ENCODE measurements at regions of chr19 and their contacts with region 1.

Region 1: GRCh38 chr19:49546825-49547565 is 19.2 kb downstream of the RCN3 start:
- DNase-seq: peak; percentile 94
- H3K4me3 Mint-ChIP-seq: no peak overlapping the region
- H3K27ac Mint-ChIP-seq: no peak overlapping the region
- H3K4me1 Mint-ChIP-seq: no peaks in the 10 kb centered on the region
- H3K27me3 Mint-ChIP-seq: peaks cover 13% of the 10 kb centered on the region
- CTCF ChIP-seq: peak; percentile 71

Region 2: DNA sequence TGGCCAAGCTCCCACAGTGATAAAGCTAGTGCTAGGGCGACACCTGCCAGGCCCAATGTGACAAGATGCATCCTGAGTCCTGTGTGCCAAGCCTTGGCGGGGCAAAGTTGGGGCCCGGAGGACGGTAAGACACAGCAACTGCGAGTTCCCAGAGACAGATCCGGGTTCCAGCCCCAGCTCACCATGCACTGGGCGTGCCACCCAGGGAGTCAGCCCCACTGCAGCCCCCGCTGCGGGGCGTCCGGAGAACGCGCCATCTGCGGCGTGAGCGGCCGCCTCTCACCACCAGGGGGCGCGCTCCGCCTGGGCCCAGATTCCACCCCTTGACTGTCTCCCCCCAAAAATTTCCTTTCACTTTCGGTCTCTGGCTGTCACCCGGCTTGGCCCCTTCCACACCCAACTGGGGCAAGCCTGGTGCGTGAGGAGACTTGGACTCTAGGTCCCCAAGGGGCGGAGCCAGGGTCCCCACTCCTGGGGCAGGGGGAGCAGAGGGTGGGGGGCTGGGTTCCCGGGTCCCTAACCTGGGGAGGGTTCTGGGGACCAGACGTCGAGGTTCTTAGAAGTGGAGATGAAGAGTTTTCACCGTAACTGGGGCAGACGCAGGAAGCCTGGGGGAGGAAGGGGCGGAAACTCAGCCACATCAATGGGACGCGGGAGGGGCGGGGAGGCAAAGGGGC is 73.0 kb before region 1 on chr19 and contains the start of gene FLT3LG:
- CTCF ChIA-PET with region 1: interaction called, 20 read pairs
- POLR2A ChIA-PET with region 1: no interaction called
- intact Hi-C with region 1: loop called (anchors 1 kb)
- DNase-seq: peak; percentile 78
- H3K4me3 Mint-ChIP-seq: peak within 1 kb of the TSS; percentile 77
- H3K27ac Mint-ChIP-seq: peak within 1 kb of the TSS; percentile 59
- H3K4me1 Mint-ChIP-seq: peaks cover 3% of the 10 kb centered on the region
- H3K27me3 Mint-ChIP-seq: peaks cover 13% of the 10 kb centered on the region
- CTCF ChIP-seq: peak; percentile 95
- total RNA-seq, gene FLT3LG: 1.5 and 3.6 TPM in 2 replicates

Region 3: DNA sequence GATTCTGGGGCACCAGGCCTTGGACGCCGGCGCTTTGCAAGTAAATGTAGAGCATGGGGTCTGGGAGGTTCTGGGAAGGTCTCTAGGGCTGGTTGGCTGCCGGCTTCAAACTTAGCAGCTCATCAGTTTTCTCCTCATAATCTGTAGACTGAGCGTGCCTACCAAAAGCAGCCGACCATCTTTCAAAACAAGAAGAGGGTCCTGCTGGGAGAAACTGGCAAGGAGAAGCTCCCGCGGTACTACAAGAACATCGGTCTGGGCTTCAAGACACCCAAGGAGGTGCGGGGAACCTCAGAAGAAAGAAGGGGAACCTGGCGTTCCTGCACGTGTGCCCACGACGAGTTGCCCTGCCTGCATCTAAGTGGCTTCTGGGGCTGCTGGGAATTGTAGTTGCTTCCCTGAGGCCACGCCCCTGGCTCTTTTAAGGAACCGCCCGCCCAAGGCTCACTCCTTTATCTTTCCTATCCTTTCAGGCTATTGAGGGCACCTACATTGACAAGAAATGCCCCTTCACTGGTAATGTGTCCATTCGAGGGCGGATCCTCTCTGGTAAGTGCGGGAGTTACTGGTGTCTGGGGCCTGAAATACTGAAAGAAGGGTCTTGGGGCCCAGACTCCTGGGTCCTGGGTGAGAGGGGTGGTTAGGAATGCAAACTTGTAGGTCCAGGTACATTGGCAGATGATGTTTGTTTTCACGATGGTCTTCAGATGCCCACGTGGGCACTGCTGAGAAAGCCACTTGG is 49.8 kb before region 1 on chr19:
- CTCF ChIA-PET with region 1: interaction called, 45 read pairs
- POLR2A ChIA-PET with region 1: interaction called, 15 read pairs
- intact Hi-C with region 1: no loop called
- DNase-seq: peak; percentile 68
- H3K4me3 Mint-ChIP-seq: peak overlapping the region; percentile 91
- H3K27ac Mint-ChIP-seq: peak overlapping the region; percentile 97
- H3K4me1 Mint-ChIP-seq: peaks cover 6% of the 10 kb centered on the region
- H3K27me3 Mint-ChIP-seq: no peaks in the 10 kb centered on the region
- CTCF ChIP-seq: no peak

Region 4: GRCh38 chr19:49502866-49503581 is 44.0 kb before region 1 on chr19:
- CTCF ChIA-PET with region 1: interaction called, 45 read pairs
- POLR2A ChIA-PET with region 1: interaction called, 15 read pairs
- intact Hi-C with region 1: loop called (anchors 1 kb)
- DNase-seq: peak; percentile 73
- H3K4me3 Mint-ChIP-seq: no peak overlapping the region
- H3K27ac Mint-ChIP-seq: no peak overlapping the region
- H3K4me1 Mint-ChIP-seq: peaks cover 6% of the 10 kb centered on the region
- H3K27me3 Mint-ChIP-seq: no peaks in the 10 kb centered on the region
- CTCF ChIP-seq: peak; percentile 44

Region 5: DNA sequence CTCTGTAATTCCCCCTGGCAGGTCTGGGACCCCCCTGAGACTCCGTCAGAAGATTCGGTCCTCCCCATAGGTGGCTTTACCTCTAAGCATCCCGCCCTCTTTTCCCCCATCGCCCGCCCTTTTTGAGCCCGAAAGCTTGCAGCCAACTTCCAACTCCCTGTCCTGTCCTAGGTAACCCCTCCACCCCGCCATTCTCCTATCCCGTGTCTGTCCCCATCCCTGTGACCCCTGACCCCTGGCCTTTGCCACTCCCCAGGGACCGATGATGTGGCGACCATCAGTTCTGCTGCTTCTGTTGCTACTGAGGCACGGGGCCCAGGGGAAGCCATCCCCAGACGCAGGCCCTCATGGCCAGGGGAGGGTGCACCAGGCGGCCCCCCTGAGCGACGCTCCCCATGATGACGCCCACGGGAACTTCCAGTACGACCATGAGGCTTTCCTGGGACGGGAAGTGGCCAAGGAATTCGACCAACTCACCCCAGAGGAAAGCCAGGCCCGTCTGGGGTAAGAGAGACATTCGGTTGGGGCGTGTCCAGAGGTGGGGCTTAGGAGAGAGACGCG is 18.7 kb before region 1 on chr19:
- CTCF ChIA-PET with region 1: interaction called, 13 read pairs
- POLR2A ChIA-PET with region 1: interaction called, 3 read pairs
- intact Hi-C with region 1: no loop called
- DNase-seq: no peak
- H3K4me3 Mint-ChIP-seq: no peak overlapping the region
- H3K27ac Mint-ChIP-seq: no peak overlapping the region
- H3K4me1 Mint-ChIP-seq: peaks cover 4% of the 10 kb centered on the region
- H3K27me3 Mint-ChIP-seq: peaks cover 19% of the 10 kb centered on the region
- CTCF ChIP-seq: no peak

Region 6: GRCh38 chr19:49533551-49534488 is 13.2 kb before region 1 on chr19:
- CTCF ChIA-PET with region 1: interaction called, 26 read pairs
- POLR2A ChIA-PET with region 1: interaction called, 3 read pairs
- intact Hi-C with region 1: no loop called
- DNase-seq: peak; percentile 75
- H3K4me3 Mint-ChIP-seq: peak overlapping the region; percentile 73
- H3K27ac Mint-ChIP-seq: no peak overlapping the region
- H3K4me1 Mint-ChIP-seq: peaks cover 6% of the 10 kb centered on the region
- H3K27me3 Mint-ChIP-seq: peaks cover 11% of the 10 kb centered on the region
- CTCF ChIP-seq: peak; percentile 39

Region 7: GRCh38 chr19:49570138-49570856 is 23.3 kb after region 1 on chr19:
- CTCF ChIA-PET with region 1: interaction called, 51 read pairs
- POLR2A ChIA-PET with region 1: interaction called, 6 read pairs
- intact Hi-C with region 1: loop called (anchors 1 kb)
- DNase-seq: peak; percentile 91
- H3K4me3 Mint-ChIP-seq: no peak overlapping the region
- H3K27ac Mint-ChIP-seq: no peak overlapping the region
- H3K4me1 Mint-ChIP-seq: peaks cover 16% of the 10 kb centered on the region
- H3K27me3 Mint-ChIP-seq: no peaks in the 10 kb centered on the region
- CTCF ChIP-seq: peak; percentile 97